ENCODE measurements at regions of chr20 and their contacts with region 1.

Region 1: GRCh38 chr20:2093159-2093781 is 8.4 kb upstream of the STK35 start:
- DNase-seq: peak; percentile 59 to 60
- ATAC-seq: peak; percentile 66 to 85; a peak in 4 of 6 replicates
- H3K4me3 ChIP-seq: no peak overlapping the region
- H3K27ac ChIP-seq: no peak overlapping the region
- H3K4me1 ChIP-seq: no peaks in the 10 kb centered on the region
- CTCF ChIP-seq: peak; percentile 68
- EP300 ChIP-seq: no peak
- POLR2A ChIP-seq: no peak
- RAD21 ChIP-seq: peak; percentile 66 to 80

Region 2: DNA sequence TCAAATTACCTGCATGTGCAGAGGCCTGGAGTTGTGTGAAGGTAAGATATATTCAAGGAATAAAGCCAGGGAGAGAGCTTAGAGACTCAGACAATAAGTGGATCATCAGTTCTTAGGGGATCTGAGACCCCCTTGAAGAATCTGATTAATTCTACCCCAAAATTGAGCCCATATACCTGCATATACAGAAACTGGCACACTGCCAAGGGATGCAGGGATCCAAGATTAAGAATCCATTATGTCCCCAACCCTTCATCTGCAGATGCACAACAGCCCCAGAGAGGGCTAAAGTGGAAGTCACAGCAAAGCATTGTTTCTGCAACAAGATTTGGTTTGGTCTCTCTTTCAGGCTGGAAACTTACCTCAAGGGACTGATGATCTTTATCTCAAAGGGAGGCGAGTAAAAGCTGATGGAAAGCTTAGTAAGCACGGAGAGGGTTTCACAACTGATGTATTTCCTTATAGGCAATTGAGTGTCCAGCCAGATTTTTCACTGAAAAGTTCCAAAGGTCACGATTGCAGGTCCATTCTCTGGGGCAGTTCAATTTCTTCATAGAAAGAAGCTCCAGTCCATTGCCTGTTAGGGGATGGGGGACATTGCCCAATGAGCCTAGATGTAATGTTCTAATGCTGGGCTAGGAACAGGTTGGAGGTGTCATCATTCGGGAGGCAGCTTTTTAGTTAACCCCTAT is 12.6 kb before region 1 on chr20:
- CTCF ChIA-PET with region 1: interaction called, 18 read pairs
- POLR2A ChIA-PET with region 1: no interaction called
- DNase-seq: no peak
- ATAC-seq: no peak
- H3K4me3 ChIP-seq: no peak overlapping the region
- H3K27ac ChIP-seq: no peak overlapping the region
- H3K4me1 ChIP-seq: no peaks in the 10 kb centered on the region
- CTCF ChIP-seq: no peak
- EP300 ChIP-seq: no peak
- POLR2A ChIP-seq: no peak
- RAD21 ChIP-seq: no peak

Region 3: DNA sequence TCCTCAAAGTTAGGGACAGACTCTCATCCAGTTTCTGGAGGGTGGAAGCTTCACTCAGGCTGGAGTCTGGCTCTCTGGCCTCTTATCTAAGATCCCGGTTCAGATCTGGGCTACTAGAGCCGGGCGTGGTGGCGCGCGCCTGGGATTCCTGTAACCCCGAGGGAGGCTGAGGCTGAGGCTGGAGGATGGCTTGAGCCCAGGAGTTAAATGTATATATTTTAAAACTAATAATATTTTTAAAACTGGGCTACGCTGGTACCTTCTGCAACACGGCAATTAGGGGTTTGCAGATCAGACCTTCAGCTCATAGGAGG is 416.2 kb after region 1 on chr20:
- CTCF ChIA-PET with region 1: no interaction called
- POLR2A ChIA-PET with region 1: no interaction called
- DNase-seq: no peak
- ATAC-seq: no peak
- H3K4me3 ChIP-seq: peak overlapping the region; percentile 68
- H3K27ac ChIP-seq: peak overlapping the region; percentile 86 to 89
- H3K4me1 ChIP-seq: peaks cover 12% of the 10 kb centered on the region
- CTCF ChIP-seq: no peak
- EP300 ChIP-seq: no peak
- POLR2A ChIP-seq: no peak
- RAD21 ChIP-seq: no peak